ENCODE measurements at regions of chr4 and their contacts with region 1.

Region 1: GRCh38 chr4:87026800-87027495 is 92.1 kb downstream of the AFF1 start:
- DNase-seq: no peak
- ATAC-seq: peak; percentile 94
- H3K4me3 Mint-ChIP-seq: peak overlapping the region; percentile 56
- H3K27ac Mint-ChIP-seq: peak overlapping the region; percentile 89
- H3K4me1 Mint-ChIP-seq: peaks cover 65% of the 10 kb centered on the region
- H3K27me3 Mint-ChIP-seq: no peaks in the 10 kb centered on the region
- CTCF ChIP-seq: no peak

Region 2: DNA sequence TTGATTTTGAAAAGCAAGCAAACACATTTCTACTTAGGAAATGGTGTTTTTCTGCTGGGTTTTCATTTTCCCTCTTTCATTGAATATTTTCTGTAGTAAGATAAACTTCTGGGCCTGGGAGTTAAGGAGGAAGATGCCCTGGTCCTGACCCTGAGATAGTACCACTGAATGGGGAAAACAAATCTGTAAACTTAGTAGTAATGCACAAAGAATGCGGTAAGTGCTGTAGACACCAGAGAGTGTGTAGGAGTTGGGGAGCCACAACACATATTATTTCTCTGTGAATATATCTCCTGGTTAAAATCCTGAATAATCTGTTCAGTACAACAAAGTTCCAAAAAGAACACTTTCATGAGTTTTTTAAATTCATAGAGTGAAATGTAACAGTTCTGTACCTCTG is 845.4 kb before region 1 on chr4:
- CTCF ChIA-PET with region 1: no interaction called
- POLR2A ChIA-PET with region 1: no interaction called
- intact Hi-C with region 1: no loop called
- DNase-seq: no peak
- ATAC-seq: no peak
- H3K4me3 Mint-ChIP-seq: no peak overlapping the region
- H3K27ac Mint-ChIP-seq: no peak overlapping the region
- H3K4me1 Mint-ChIP-seq: no peaks in the 10 kb centered on the region
- H3K27me3 Mint-ChIP-seq: peaks cover 2% of the 10 kb centered on the region
- CTCF ChIP-seq: no peak

Region 3: DNA sequence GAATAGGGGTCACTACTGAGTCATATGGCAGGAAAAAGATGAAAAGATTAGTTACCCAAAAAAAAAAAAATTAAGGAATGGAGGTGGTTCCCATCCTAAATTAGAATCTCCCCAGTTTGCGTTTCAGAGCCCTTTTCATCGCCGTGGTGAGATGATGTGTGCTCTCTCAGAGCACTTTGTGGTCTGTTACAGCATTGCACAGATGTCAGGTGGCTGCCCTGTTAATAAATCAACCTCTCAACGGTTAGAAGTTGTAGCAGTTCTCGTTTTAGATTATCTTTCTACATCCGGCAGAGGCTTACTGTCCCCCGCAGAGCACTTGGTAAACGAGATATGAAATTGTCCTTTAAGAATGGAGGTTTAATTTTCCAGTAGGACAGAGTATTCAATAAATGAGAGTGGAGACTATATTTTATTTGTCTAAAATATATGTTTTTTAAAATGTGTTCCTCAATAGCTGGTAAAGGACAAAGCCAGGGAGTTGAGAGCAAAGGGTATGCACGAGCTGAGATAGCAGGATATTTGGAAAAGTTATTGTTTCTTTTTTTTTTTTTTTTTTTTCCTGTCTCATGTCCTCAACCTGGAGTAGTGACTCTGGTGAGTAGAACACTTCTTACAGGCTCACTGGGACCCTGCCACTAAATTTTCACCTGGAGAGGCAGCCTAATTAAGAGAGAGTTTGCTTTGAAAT is 65.2 kb before region 1 on chr4:
- CTCF ChIA-PET with region 1: no interaction called
- POLR2A ChIA-PET with region 1: no interaction called
- intact Hi-C with region 1: loop called (anchors 2 kb)
- DNase-seq: no peak
- ATAC-seq: peak; percentile 89
- H3K4me3 Mint-ChIP-seq: peak overlapping the region; percentile 33
- H3K27ac Mint-ChIP-seq: peak overlapping the region; percentile 82
- H3K4me1 Mint-ChIP-seq: peaks cover 50% of the 10 kb centered on the region
- H3K27me3 Mint-ChIP-seq: no peaks in the 10 kb centered on the region
- CTCF ChIP-seq: no peak

Region 4: GRCh38 chr4:87038837-87039615 is 12.1 kb after region 1 on chr4:
- CTCF ChIA-PET with region 1: no interaction called
- POLR2A ChIA-PET with region 1: no interaction called
- intact Hi-C with region 1: loop called (anchors 1 kb)
- DNase-seq: no peak
- ATAC-seq: peak; percentile 83
- H3K4me3 Mint-ChIP-seq: peak overlapping the region; percentile 22
- H3K27ac Mint-ChIP-seq: peak overlapping the region; percentile 14
- H3K4me1 Mint-ChIP-seq: peaks cover 80% of the 10 kb centered on the region
- H3K27me3 Mint-ChIP-seq: no peaks in the 10 kb centered on the region
- CTCF ChIP-seq: no peak

Region 5: GRCh38 chr4:87093443-87094123 is 66.6 kb after region 1 on chr4:
- CTCF ChIA-PET with region 1: interaction called, 6 read pairs
- POLR2A ChIA-PET with region 1: no interaction called
- intact Hi-C with region 1: loop called (anchors 1 kb)
- DNase-seq: no peak
- ATAC-seq: peak; percentile 89
- H3K4me3 Mint-ChIP-seq: no peak overlapping the region
- H3K27ac Mint-ChIP-seq: peak overlapping the region; percentile 62
- H3K4me1 Mint-ChIP-seq: peaks cover 20% of the 10 kb centered on the region
- H3K27me3 Mint-ChIP-seq: no peaks in the 10 kb centered on the region
- CTCF ChIP-seq: peak; percentile 15